A549 (cell line): ENCODE measurements at regions of chr2 and their contacts with region 1.

Region 1: GRCh38 chr2:47798631-47799030 is 15.7 kb downstream of the MSH6 start:
- DNase-seq: no peak
- ATAC-seq: no peak
- H3K4me3 ChIP-seq: no peak overlapping the region
- H3K27ac ChIP-seq: no peak overlapping the region
- H3K4me1 ChIP-seq: no peaks in the 10 kb centered on the region
- CTCF ChIP-seq: no peak
- EP300 ChIP-seq: no peak
- POLR2A ChIP-seq: no peak
- RAD21 ChIP-seq: no peak

Region 2: DNA sequence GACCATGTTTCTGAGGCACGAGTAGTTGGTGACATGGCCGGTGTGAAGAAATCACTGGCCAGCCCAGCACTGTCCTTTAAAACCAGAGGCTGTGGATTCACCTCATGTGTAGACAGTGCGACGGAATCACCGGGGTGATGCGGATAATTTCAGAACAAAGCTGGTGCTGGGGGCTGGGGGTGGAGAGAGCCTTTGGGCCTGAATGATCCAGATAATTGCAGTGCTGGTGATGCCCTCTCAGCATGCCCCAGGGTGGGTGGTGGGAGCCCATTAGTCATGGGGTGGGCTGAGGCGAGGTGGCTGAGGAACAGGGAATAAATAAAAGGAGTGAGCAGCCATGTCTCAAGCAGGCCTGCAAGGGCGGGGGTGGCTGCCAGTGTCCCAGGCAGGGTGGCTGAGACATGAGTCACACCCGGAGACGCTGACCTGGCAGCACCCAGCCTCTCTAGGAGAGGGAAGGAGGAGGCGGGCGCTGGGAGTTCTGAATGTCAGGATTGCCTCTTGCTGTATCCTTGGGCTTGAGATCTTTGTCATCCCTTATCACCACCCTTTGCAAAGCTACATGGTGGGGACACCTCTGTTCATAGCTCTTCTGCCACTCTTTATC is 166.7 kb before region 1 on chr2:
- CTCF ChIA-PET with region 1: no interaction called
- POLR2A ChIA-PET with region 1: no interaction called
- DNase-seq: peak; percentile 72 to 97
- ATAC-seq: peak; percentile 96 to 97
- H3K4me3 ChIP-seq: no peak overlapping the region
- H3K27ac ChIP-seq: peak overlapping the region; percentile 60 to 83
- H3K4me1 ChIP-seq: peaks cover 16% of the 10 kb centered on the region
- CTCF ChIP-seq: no peak
- EP300 ChIP-seq: no peak
- POLR2A ChIP-seq: no peak
- RAD21 ChIP-seq: no peak

Region 3: GRCh38 chr2:47782671-47783485 is 15.8 kb before region 1 on chr2 and contains the start of gene MSH6:
- CTCF ChIA-PET with region 1: interaction called, 4 read pairs
- POLR2A ChIA-PET with region 1: interaction called, 12 read pairs
- DNase-seq: peak; percentile 93 to 95
- ATAC-seq: peak; percentile 83 to 89
- H3K4me3 ChIP-seq: peak within 1 kb of the TSS; percentile 81
- H3K27ac ChIP-seq: peak within 1 kb of the TSS; percentile 89 to 91
- H3K4me1 ChIP-seq: peaks cover 15% of the 10 kb centered on the region; the same call in 2 of the 3 replicates
- CTCF ChIP-seq: no peak
- EP300 ChIP-seq: no peak
- POLR2A ChIP-seq: peak; percentile 63
- RAD21 ChIP-seq: no peak
- polyA plus RNA-seq, gene MSH6: 85.5 and 108 TPM in 2 replicates